A673 (cell line): ENCODE measurements at regions of chr2 and their contacts with region 1.

Region 1: DNA sequence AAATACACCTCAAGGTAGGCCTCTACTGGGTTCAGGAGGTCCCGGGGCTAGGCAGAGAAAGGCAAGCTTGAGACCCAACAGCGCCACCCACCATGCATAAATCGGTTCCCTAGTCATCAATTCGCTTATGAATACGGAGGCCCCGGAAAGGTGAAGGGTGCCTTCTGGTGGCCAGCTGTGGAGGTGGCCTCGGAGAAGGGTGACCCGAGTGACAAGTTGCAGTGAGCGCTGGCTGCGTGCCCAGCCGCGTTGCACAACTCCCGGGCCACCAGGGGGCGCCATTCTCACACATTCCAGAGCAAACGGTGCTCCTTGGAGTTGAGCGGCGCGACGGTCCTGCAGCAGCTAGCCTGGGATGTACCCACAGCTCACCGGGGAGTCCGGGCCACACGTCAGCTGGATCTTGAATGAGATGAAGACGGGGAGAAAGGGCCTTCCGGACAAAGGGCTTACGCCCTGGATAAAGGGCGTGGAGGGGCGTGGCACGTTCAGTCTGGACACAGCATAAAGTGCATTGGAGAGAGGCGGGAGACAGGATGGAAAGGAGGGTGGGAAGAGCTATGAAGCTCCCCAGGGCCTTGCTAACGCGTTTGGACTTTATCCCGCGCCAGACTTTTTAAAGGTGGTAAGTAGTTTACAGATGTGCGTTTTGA is 20.4 kb downstream of the TMSB10 start:
- DNase-seq: peak; percentile 97
- H3K4me3 ChIP-seq: peak overlapping the region; percentile 53
- H3K27ac ChIP-seq: peak overlapping the region; percentile 62
- H3K4me1 ChIP-seq: peaks cover 18% of the 10 kb centered on the region
- H3K27me3 ChIP-seq: no peaks in the 10 kb centered on the region
- CTCF ChIP-seq: peak; percentile 95

Region 2: DNA sequence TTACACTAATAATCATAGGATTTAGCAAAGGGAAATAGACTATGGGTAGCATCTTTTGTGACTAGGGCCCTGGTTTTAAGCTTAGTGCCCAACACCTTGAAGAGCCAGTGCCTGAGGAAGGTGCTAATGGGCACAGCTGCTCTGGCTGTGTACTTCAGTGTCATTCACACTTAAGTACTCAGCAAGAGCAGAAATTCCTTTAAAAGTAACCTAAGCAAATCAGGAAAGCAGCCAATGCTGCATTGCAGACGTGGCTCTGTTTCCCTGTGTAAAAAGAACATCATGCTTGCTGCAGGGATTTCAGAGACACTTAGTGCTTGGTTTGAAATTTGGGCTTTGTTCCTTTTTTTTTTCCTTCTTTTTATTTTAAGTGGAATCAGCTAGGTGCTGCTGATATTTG is 972.2 kb before region 1 on chr2:
- CTCF ChIA-PET with region 1: interaction called, 12 read pairs
- POLR2A ChIA-PET with region 1: no interaction called
- intact Hi-C with region 1: no loop called
- DNase-seq: no peak
- H3K4me3 ChIP-seq: no peak overlapping the region
- H3K27ac ChIP-seq: no peak overlapping the region
- H3K4me1 ChIP-seq: no peaks in the 10 kb centered on the region
- H3K27me3 ChIP-seq: no peaks in the 10 kb centered on the region
- CTCF ChIP-seq: no peak

Region 3: GRCh38 chr2:84881581-84882414 is 44.1 kb before region 1 on chr2:
- CTCF ChIA-PET with region 1: interaction called, 3 read pairs
- POLR2A ChIA-PET with region 1: no interaction called
- intact Hi-C with region 1: loop called (anchors 1 kb)
- DNase-seq: peak; percentile 91
- H3K4me3 ChIP-seq: peak overlapping the region; percentile 39
- H3K27ac ChIP-seq: no peak overlapping the region
- H3K4me1 ChIP-seq: peaks cover 18% of the 10 kb centered on the region
- H3K27me3 ChIP-seq: peaks cover 65% of the 10 kb centered on the region
- CTCF ChIP-seq: peak; percentile 88

Region 4: GRCh38 chr2:84958135-84959044 is 32.5 kb after region 1 on chr2:
- CTCF ChIA-PET with region 1: interaction called, 12 read pairs
- POLR2A ChIA-PET with region 1: no interaction called
- intact Hi-C with region 1: no loop called
- DNase-seq: no peak
- H3K4me3 ChIP-seq: no peak overlapping the region
- H3K27ac ChIP-seq: no peak overlapping the region
- H3K4me1 ChIP-seq: no peaks in the 10 kb centered on the region
- H3K27me3 ChIP-seq: no peaks in the 10 kb centered on the region
- CTCF ChIP-seq: no peak

Region 5: DNA sequence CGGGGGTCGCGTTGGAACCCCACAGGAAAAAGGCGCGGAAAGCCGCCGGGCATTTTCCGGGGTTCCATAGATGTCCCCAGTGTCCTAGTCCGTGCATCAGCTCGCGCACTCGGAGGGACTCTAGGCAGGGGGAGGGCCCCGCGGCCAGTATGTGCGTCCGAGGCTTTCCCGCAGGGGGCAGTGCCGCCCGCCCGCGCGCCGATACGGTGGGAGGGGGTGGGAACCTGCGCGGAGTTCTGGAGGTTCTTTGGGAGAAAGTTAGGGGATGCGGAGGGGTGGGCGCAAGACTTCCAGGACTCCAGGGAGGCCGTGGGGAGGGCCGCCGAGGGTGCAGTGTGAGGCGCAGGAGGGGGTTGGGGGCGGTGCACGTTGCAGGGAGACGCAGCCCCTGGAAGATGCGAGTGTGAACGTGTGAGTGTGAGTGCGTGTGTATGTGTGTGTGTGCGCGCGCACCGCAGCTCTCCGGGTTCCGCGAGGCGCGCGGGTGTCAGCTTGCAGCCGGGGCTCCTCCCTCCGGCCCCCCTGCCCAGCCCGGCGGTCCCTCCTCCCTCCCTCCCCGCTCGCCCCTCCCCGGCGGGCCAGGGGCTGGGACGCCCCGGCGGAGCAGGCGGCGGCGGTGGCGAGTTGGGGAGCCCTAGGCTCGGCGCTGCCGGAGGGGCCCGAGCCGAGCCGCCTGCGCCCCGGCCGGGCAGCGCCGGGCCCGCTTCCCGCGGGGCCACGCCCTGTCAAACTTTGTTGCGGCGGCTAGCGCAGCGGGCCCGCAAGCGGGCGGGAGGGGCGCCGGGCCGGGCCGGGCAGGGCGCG is 207.2 kb after region 1 on chr2 and contains the start of gene TCF7L1:
- CTCF ChIA-PET with region 1: no interaction called
- POLR2A ChIA-PET with region 1: no interaction called
- intact Hi-C with region 1: loop called (anchors 5 kb)
- DNase-seq: peak; percentile 93
- H3K4me3 ChIP-seq: peak within 1 kb of the TSS; percentile 71
- H3K27ac ChIP-seq: peak within 1 kb of the TSS; percentile 55
- H3K4me1 ChIP-seq: peaks cover 18% of the 10 kb centered on the region
- H3K27me3 ChIP-seq: no peaks in the 10 kb centered on the region
- CTCF ChIP-seq: peak; percentile 96
- total RNA-seq, gene TCF7L1: 21.9 and 29.3 TPM in 2 replicates